ENCODE measurements at regions of chr2 and their contacts with region 1.

Region 1: GRCh38 chr2:88669371-88670214 is 21.9 kb upstream of the RPIA start:
- DNase-seq: no peak
- ATAC-seq: peak; percentile 83 to 93
- H3K4me3 ChIP-seq: no peak overlapping the region
- H3K27ac ChIP-seq: peak overlapping the region in 1 of 4 donors; percentile 39
- H3K4me1 ChIP-seq: peaks cover 4 to 6% of the 10 kb centered on the region in 2 donors
- H3K27me3 ChIP-seq: no peaks in the 10 kb centered on the region
- CTCF ChIP-seq: peak; percentile 64 to 79 (median 72)
- POLR2A ChIP-seq: no peak

Region 2: GRCh38 chr2:88170472-88170892 is 499.1 kb before region 1 on chr2:
- in situ Hi-C with region 1: no loop called
- intact Hi-C with region 1: loop called (anchors 10 kb)
- DNase-seq: no peak
- ATAC-seq: peak; percentile 13 to 27
- H3K4me3 ChIP-seq: peak overlapping the region; percentile 60 to 90 (median 86)
- H3K27ac ChIP-seq: peak overlapping the region; percentile 62 to 98 (median 96)
- H3K4me1 ChIP-seq: peaks cover 44 to 55% of the 10 kb centered on the region in 2 donors
- H3K27me3 ChIP-seq: no peaks in the 10 kb centered on the region
- CTCF ChIP-seq: no peak
- POLR2A ChIP-seq: peak in 1 of 2 donors; percentile 13

Region 3: DNA sequence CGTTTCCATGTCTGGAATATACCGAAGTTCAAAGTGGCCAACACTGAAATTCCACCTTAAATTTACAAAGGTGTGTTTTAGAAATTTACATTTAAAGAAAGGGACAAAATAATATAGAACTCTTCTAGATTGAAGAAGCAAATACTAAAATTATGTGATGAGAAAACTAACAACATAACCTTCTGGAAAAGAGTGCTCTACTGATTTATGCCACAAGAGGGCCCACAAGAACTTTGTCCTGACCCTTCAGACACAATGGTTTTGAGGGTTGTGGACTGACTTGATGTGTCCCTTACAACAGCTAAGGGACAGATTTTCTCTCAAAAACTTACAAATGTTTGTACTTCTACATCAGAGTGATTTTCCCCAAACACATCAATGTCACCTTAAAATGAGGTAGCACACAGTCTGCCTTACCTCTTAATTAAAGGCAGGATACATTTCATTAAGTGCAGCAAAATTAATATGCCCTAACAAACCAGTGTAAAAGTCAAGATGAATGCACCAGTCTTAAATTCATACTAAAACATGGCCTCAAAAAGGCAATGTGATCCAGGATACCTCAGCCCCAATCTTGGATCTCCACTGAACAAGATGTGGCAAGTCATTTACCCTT is 78.5 kb before region 1 on chr2:
- in situ Hi-C with region 1: loop called (anchors 5 kb)
- intact Hi-C with region 1: loop called (anchors 1 kb)
- DNase-seq: peak in 1 of 2 donors; percentile 30
- ATAC-seq: peak; percentile 90 to 95
- H3K4me3 ChIP-seq: no peak overlapping the region
- H3K27ac ChIP-seq: no peak overlapping the region
- H3K4me1 ChIP-seq: no peaks in the 10 kb centered on the region
- H3K27me3 ChIP-seq: no peaks in the 10 kb centered on the region
- CTCF ChIP-seq: peak; percentile 72 to 85 (median 78)
- POLR2A ChIP-seq: no peak

Region 4: GRCh38 chr2:88606371-88607030 is 63.1 kb before region 1 on chr2:
- in situ Hi-C with region 1: no loop called
- intact Hi-C with region 1: no loop called
- DNase-seq: no peak
- ATAC-seq: no peak
- H3K4me3 ChIP-seq: no peak overlapping the region
- H3K27ac ChIP-seq: no peak overlapping the region
- H3K4me1 ChIP-seq: peaks cover 0 to under 1% of the 10 kb centered on the region in 2 donors
- H3K27me3 ChIP-seq: no peaks in the 10 kb centered on the region
- CTCF ChIP-seq: no peak
- POLR2A ChIP-seq: no peak